ENCODE measurements at regions of chr2 and their contacts with region 1.

Region 1: GRCh38 chr2:209423562-209424198 is at the start of gene MAP2:
- DNase-seq: peak; percentile 87
- ATAC-seq: peak; percentile 100
- total RNA-seq, gene MAP2: 2.8 TPM

Region 2: GRCh38 chr2:209334198-209335017 is 89.3 kb before region 1 on chr2:
- intact Hi-C with region 1: loop called (anchors 5 kb)
- DNase-seq: peak; percentile 48
- ATAC-seq: peak; percentile 69

Region 3: GRCh38 chr2:209565896-209566582 is 142.4 kb after region 1 on chr2:
- intact Hi-C with region 1: loop called (anchors 10 kb)
- DNase-seq: no peak
- ATAC-seq: no peak

Region 4: DNA sequence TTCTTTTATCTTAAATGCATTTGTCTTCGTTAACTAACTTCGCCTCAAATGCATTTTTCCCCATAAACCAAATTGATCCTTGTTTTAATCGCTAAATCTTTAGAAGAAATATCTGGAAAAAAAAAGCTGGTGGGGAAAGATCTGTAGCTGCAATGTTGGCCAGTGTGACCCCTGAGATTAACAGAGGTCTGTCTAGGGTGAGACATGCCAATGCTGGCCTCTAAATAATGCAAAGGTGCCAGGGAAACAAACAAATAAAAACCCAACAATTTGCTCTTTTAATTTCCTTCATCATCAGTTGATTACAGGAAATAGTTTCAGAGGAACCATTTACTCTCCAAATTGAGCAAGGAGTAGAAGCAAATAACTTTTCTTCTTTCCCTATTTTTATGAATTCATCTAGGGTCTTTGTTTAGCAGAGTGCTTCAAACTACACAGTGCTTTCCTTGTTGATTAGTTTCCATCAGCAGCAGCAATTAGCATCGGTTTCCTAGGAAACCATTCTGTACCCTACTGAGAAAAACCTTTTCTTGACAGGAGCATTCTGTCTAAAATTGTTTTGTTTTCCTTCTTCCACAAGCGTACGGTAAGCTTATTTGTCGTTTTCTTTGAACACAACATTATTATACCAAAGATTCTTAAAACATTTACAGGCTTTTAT is 247.5 kb after region 1 on chr2:
- intact Hi-C with region 1: no loop called
- DNase-seq: no peak
- ATAC-seq: no peak